Common myeloid progenitor, CD34-positive (primary cell): ENCODE measurements at regions of chr11 and their contacts with region 1.

Region 1: DNA sequence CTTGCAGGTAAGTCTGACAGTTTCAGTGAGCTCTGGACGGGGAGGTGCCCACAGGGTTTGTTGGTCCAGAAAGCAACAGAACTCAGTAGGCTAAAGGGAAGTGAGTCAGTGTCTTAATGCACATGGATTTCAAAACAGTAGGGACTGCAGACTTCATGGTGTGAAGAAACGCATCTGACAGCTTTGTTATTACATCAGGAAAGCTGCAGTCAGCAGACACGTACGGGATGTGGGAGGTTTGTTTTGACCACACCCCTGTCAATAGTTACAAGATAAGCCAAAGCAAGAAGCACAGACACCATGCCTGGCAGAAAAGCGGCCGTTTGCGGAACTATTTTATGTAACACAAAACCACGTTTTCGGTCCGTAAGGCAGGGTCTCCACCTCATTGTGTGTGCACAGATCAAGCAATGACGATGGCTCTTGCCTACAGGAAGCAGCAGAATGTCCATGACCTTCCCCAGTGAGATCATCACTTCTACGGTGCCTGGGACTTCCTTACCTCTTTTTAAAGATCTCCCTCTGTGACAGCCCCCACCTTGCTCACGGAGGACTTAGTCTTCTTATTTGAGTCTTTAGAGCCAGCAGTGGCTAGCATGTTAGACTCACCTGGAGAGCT is 58.2 kb upstream of the FTH1 start:
- DNase-seq: peak; percentile 99 to 100 (median 99)
- H3K4me3 ChIP-seq: peak overlapping the region in 3 of 7 experiments; percentile 32 to 50 (median 33)
- H3K27ac ChIP-seq: peak overlapping the region; percentile 96 to 97
- H3K4me1 ChIP-seq: peaks cover 7 to 23% (median 15%) of the 10 kb centered on the region in 4 experiments
- H3K27me3 ChIP-seq: no peaks in the 10 kb centered on the region

Region 2: DNA sequence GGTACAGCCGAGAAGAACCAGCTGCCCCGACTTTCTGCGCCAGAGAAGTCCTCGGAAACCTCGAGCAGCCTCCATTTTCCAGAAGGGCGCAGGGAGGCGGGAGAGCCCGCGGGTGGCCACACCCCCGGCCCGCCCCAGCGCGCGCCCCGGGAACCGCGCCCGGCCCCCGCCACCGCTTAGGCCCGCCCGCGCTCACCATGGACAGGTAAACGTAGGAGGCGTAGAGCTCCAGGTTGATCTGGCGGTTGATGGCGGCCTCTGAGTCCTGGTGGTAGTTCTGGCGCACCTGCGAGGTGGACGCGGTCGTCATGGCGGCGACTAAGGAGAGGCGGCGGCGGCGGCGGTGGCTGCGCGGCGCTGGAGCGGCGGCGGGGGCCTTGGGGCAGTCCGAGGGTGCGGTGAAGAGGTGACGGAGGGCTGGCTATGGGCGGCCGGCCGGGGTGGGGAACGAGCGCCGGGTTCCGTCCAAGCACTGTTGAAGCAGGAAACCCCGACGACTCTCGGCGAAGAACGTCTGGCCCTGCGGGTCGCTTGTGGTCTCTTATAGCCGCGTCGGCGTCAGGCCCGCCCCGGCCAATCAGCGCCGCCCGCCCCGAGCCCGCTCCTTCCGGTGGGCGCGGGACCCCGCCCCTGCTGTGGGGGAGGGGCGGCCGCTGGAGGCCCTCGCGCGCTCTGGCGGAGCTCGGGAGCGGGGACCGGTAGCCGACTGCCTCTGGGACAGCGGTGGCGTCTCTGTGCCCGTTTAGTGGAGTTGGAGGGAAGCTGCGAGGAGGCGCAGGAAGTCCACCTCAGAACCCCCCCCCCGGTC is 58.3 kb before region 1 on chr11 and contains the start of gene FTH1:
- CTCF ChIA-PET with region 1: interaction called, 10 read pairs
- POLR2A ChIA-PET with region 1: interaction called, 56 read pairs
- DNase-seq: peak; percentile 90 to 95 (median 95)
- H3K4me3 ChIP-seq: peak within 1 kb of the TSS; percentile 64 to 100 (median 97)
- H3K27ac ChIP-seq: peak within 1 kb of the TSS; percentile 86 to 93
- H3K4me1 ChIP-seq: peaks cover 45 to 89% (median 78%) of the 10 kb centered on the region in 4 experiments
- H3K27me3 ChIP-seq: no peaks in the 10 kb centered on the region

Region 3: DNA sequence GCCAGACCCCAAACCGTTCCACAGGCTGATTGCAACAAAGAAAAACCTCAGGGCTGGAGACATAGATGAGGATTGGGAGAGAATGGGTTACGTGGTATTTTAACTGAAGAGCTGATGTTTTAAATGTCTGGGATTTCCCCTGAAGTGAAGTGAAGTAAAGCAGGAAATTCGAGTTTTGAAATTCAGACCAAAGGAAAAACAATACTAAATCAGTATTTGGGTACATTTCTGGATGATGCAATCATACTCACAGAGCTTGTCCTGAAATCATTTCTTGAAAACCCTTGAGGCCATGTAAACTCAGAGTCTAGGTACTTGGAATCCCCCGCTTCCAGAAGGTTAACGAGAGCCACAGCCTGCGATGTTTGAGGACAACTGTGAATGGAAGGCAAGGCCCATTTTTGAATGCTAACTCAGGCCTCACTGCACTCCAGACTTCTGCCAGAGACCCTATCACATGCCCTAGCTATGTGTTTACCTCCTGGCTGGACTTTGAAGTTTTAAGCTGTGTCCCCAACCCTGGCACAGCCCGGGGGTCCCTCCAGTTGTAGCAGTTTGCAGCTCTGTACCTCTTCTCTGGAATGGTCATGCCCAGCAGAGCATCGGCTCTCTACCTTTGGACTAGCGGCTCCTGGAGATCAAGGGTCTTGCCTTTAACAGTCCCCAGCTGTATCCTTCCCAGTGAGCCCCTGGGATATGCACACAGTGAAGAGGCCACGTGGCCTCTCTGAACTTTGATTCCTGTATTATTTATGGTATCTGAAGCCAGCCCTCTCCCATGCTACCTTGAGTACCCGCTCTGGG is 52.7 kb before region 1 on chr11:
- CTCF ChIA-PET with region 1: interaction called, 10 read pairs
- POLR2A ChIA-PET with region 1: interaction called, 56 read pairs
- DNase-seq: peak in 1 of 3 donors; percentile 58
- H3K4me3 ChIP-seq: peak overlapping the region in 5 of 7 experiments; percentile 16 to 48 (median 26)
- H3K27ac ChIP-seq: peak overlapping the region in 1 of 2 experiments; percentile 87
- H3K4me1 ChIP-seq: peaks cover 39 to 77% (median 63%) of the 10 kb centered on the region in 4 experiments
- H3K27me3 ChIP-seq: no peaks in the 10 kb centered on the region

Region 4: GRCh38 chr11:62048065-62048464 is 22.5 kb after region 1 on chr11:
- CTCF ChIA-PET with region 1: interaction called, 4 read pairs
- POLR2A ChIA-PET with region 1: interaction called, 25 read pairs
- DNase-seq: no peak
- H3K4me3 ChIP-seq: no peak overlapping the region
- H3K27ac ChIP-seq: no peak overlapping the region
- H3K4me1 ChIP-seq: peaks cover 0 to 7% (median 1%) of the 10 kb centered on the region in 4 experiments
- H3K27me3 ChIP-seq: no peaks in the 10 kb centered on the region